ENCODE measurements at regions of chr14 and their contacts with region 1.

Region 1: GRCh38 chr14:69129264-69129880 is 23.5 kb downstream of the DCAF5 start:
- DNase-seq: peak; percentile 85
- ATAC-seq: peak; percentile 77
- H3K4me3 Mint-ChIP-seq: no peak overlapping the region
- H3K27ac Mint-ChIP-seq: peak overlapping the region; percentile 37
- H3K4me1 Mint-ChIP-seq: peaks cover 72% of the 10 kb centered on the region
- H3K27me3 Mint-ChIP-seq: no peaks in the 10 kb centered on the region

Region 2: GRCh38 chr14:68451696-68452373 is 677.5 kb before region 1 on chr14:
- CTCF ChIA-PET with region 1: no interaction called
- POLR2A ChIA-PET with region 1: no interaction called
- intact Hi-C with region 1: no loop called
- DNase-seq: no peak
- ATAC-seq: no peak
- H3K4me3 Mint-ChIP-seq: no peak overlapping the region
- H3K27ac Mint-ChIP-seq: no peak overlapping the region
- H3K4me1 Mint-ChIP-seq: no peaks in the 10 kb centered on the region
- H3K27me3 Mint-ChIP-seq: no peaks in the 10 kb centered on the region

Region 3: DNA sequence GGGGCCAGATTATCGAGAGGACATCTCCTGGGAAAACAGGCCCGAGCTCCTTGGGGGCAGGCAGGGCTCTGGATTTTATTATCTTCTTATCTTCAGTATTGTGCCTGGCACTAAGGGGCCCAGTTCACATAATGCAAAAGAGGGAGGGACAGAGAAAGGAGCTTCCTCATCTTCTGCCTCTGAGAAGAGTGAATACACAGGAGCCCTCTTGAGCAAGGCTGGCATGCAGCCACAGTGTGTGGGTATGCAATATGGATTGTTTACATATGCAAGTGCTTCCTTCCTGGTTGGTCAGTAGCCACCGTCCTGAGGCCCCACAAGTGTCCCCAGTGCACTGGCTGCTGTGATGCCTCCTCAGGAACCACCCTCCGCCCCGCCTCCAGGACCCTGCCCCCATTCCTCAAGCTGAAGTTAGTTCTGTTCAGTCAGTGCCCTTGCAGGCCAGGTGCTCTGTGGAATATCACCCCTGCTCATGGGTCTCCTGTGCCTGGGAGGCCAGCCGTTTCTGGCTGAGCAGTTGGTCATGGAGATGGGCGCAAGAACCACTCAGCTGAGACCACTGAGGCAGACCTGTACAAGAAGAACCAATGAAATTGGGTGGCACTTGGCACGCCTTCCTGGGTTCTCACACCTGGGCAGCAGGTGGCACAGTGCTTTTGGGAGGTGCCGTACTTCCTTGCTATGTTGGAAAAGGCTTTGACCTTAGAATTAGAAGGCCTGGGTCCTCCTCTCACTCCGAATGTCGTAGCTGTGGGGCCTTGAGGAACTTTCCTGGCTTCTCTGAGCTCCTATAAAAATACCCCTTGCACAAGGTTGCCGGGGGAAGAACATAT is 115.2 kb before region 1 on chr14:
- CTCF ChIA-PET with region 1: no interaction called
- POLR2A ChIA-PET with region 1: no interaction called
- intact Hi-C with region 1: no loop called
- DNase-seq: no peak
- ATAC-seq: no peak
- H3K4me3 Mint-ChIP-seq: no peak overlapping the region
- H3K27ac Mint-ChIP-seq: no peak overlapping the region
- H3K4me1 Mint-ChIP-seq: peaks cover 6% of the 10 kb centered on the region
- H3K27me3 Mint-ChIP-seq: no peaks in the 10 kb centered on the region

Region 4: GRCh38 chr14:69107407-69108003 is 21.9 kb before region 1 on chr14:
- CTCF ChIA-PET with region 1: interaction called, 10 read pairs
- POLR2A ChIA-PET with region 1: no interaction called
- intact Hi-C with region 1: no loop called
- DNase-seq: peak; percentile 34
- ATAC-seq: peak; percentile 78
- H3K4me3 Mint-ChIP-seq: no peak overlapping the region
- H3K27ac Mint-ChIP-seq: no peak overlapping the region
- H3K4me1 Mint-ChIP-seq: peaks cover 3% of the 10 kb centered on the region
- H3K27me3 Mint-ChIP-seq: no peaks in the 10 kb centered on the region

Region 5: GRCh38 chr14:69153131-69153872 is 23.9 kb after region 1 on chr14:
- CTCF ChIA-PET with region 1: interaction called, 81 read pairs
- POLR2A ChIA-PET with region 1: interaction called, 3 read pairs
- intact Hi-C with region 1: loop called (anchors 1 to 2 kb)
- DNase-seq: peak; percentile 96
- ATAC-seq: peak; percentile 93
- H3K4me3 Mint-ChIP-seq: peak overlapping the region; percentile 83
- H3K27ac Mint-ChIP-seq: peak overlapping the region; percentile 81
- H3K4me1 Mint-ChIP-seq: peaks cover 30% of the 10 kb centered on the region
- H3K27me3 Mint-ChIP-seq: no peaks in the 10 kb centered on the region

Region 6: GRCh38 chr14:69224946-69225345 is 95.6 kb after region 1 on chr14:
- CTCF ChIA-PET with region 1: no interaction called
- POLR2A ChIA-PET with region 1: no interaction called
- intact Hi-C with region 1: loop called in 1 of 2 experiments (anchors 5 kb)
- DNase-seq: no peak
- ATAC-seq: no peak
- H3K4me3 Mint-ChIP-seq: no peak overlapping the region
- H3K27ac Mint-ChIP-seq: no peak overlapping the region
- H3K4me1 Mint-ChIP-seq: no peaks in the 10 kb centered on the region
- H3K27me3 Mint-ChIP-seq: no peaks in the 10 kb centered on the region

Region 7: GRCh38 chr14:69460093-69460701 is 330.8 kb after region 1 on chr14:
- CTCF ChIA-PET with region 1: interaction called, 21 read pairs
- POLR2A ChIA-PET with region 1: no interaction called
- intact Hi-C with region 1: loop called (anchors 1 kb)
- DNase-seq: peak; percentile 79
- ATAC-seq: peak; percentile 93
- H3K4me3 Mint-ChIP-seq: no peak overlapping the region
- H3K27ac Mint-ChIP-seq: no peak overlapping the region
- H3K4me1 Mint-ChIP-seq: no peaks in the 10 kb centered on the region
- H3K27me3 Mint-ChIP-seq: no peaks in the 10 kb centered on the region

Measured in activated CD4-positive, alpha-beta T cell treated with anti-CD3 and anti-CD28 coated beads for 36 hours (primary cell).